B cell (primary cell): ENCODE measurements at regions of chr11 and their contacts with region 1.

Region 1: GRCh38 chr11:118870396-118871345 is 13.0 kb upstream of the CXCR5 start:
- DNase-seq: peak; percentile 86
- ATAC-seq: peak; percentile 61
- H3K4me3 ChIP-seq: peak overlapping the region; percentile 15 to 66 (median 48)
- H3K4me3 Mint-ChIP-seq: peak overlapping the region; percentile 90
- H3K27ac ChIP-seq: peak overlapping the region; percentile 93 to 99
- H3K27ac Mint-ChIP-seq: peak overlapping the region; percentile 99
- H3K4me1 ChIP-seq: peaks cover 61 to 72% of the 10 kb centered on the region in 2 donors
- H3K4me1 Mint-ChIP-seq: peaks cover 60% of the 10 kb centered on the region
- H3K27me3 ChIP-seq: no peaks in the 10 kb centered on the region
- H3K27me3 Mint-ChIP-seq: no peaks in the 10 kb centered on the region
- CTCF ChIP-seq: no peak

Region 2: DNA sequence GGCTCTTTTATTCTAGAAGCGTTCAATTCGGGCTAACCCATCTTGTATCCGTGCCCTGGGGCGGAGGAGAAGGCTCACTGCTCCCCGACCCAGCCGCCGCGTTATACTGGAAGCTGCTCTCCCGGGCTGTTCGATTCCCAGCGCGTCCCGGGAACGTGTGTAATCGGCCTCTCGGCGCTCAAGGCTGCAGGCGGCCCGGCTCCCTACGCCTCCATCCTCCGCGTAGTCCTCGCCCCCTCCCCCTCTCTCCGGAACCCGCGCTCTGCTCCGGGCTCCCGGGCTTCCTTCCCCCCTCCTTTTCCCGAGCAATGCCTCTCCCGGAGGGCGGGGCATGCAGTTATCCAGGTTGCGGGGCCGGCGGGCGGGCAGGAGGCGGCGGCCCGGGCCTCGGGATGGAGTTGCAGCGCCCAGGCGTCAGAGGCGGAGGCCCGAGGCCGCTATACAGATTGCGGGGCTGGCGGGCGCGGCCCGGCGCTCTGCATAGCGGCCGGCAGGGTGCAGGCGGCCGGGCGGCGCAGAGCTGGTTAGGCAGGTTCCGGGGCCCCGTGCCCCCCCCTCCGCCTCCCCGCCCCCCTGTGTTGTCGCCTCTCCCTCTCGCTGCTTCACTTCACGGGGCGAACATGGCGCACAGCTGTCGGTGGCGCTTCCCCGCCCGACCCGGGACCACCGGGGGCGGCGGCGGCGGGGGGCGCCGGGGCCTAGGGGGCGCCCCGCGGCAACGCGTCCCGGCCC is 434.6 kb before region 1 on chr11 and contains the start of gene KMT2A:
- CTCF ChIA-PET with region 1: no interaction called
- POLR2A ChIA-PET with region 1: no interaction called
- intact Hi-C with region 1: loop called (anchors 10 kb)
- DNase-seq: peak; percentile 98
- ATAC-seq: peak; percentile 67
- H3K4me3 ChIP-seq: peak within 1 kb of the TSS; percentile 80 to 93 (median 87)
- H3K4me3 Mint-ChIP-seq: peak within 1 kb of the TSS; percentile 97
- H3K27ac ChIP-seq: peak within 1 kb of the TSS; percentile 83 to 94
- H3K27ac Mint-ChIP-seq: peak within 1 kb of the TSS; percentile 99
- H3K4me1 ChIP-seq: peaks cover 24 to 31% of the 10 kb centered on the region in 2 donors
- H3K4me1 Mint-ChIP-seq: peaks cover 42% of the 10 kb centered on the region
- H3K27me3 ChIP-seq: no peaks in the 10 kb centered on the region
- H3K27me3 Mint-ChIP-seq: no peaks in the 10 kb centered on the region
- CTCF ChIP-seq: no peak
- total RNA-seq, gene KMT2A: 175 and 198 TPM in 2 replicates

Region 3: GRCh38 chr11:118838905-118839553 is 31.6 kb before region 1 on chr11:
- CTCF ChIA-PET with region 1: interaction called, 10 read pairs
- POLR2A ChIA-PET with region 1: interaction called, 8 read pairs
- intact Hi-C with region 1: loop called (anchors 1 kb)
- DNase-seq: peak; percentile 72
- ATAC-seq: peak; percentile 85
- H3K4me3 ChIP-seq: no peak overlapping the region
- H3K4me3 Mint-ChIP-seq: peak overlapping the region; percentile 71
- H3K27ac ChIP-seq: peak overlapping the region; percentile 25 to 44
- H3K27ac Mint-ChIP-seq: peak overlapping the region; percentile 79
- H3K4me1 ChIP-seq: peaks cover 27 to 40% of the 10 kb centered on the region in 2 donors
- H3K4me1 Mint-ChIP-seq: peaks cover 41% of the 10 kb centered on the region
- H3K27me3 ChIP-seq: no peaks in the 10 kb centered on the region
- H3K27me3 Mint-ChIP-seq: no peaks in the 10 kb centered on the region
- CTCF ChIP-seq: no peak

Region 4: GRCh38 chr11:118883368-118884071 is 12.8 kb after region 1 on chr11 and contains the start of gene CXCR5:
- CTCF ChIA-PET with region 1: interaction called, 45 read pairs
- POLR2A ChIA-PET with region 1: interaction called, 90 read pairs
- intact Hi-C with region 1: loop called (anchors 1 kb)
- DNase-seq: peak; percentile 94
- ATAC-seq: peak; percentile 83
- H3K4me3 ChIP-seq: peak within 1 kb of the TSS; percentile 80 to 99 (median 95)
- H3K4me3 Mint-ChIP-seq: peak within 1 kb of the TSS; percentile 97
- H3K27ac ChIP-seq: peak within 1 kb of the TSS; percentile 91 to 99
- H3K27ac Mint-ChIP-seq: peak within 1 kb of the TSS; percentile 90
- H3K4me1 ChIP-seq: peaks cover 47 to 63% of the 10 kb centered on the region in 2 donors
- H3K4me1 Mint-ChIP-seq: peaks cover 72% of the 10 kb centered on the region
- H3K27me3 ChIP-seq: no peaks in the 10 kb centered on the region
- H3K27me3 Mint-ChIP-seq: no peaks in the 10 kb centered on the region
- CTCF ChIP-seq: peak; percentile 41
- total RNA-seq, gene CXCR5: 108 and 111 TPM in 2 replicates

Region 5: GRCh38 chr11:118895142-118896039 is 24.7 kb after region 1 on chr11:
- CTCF ChIA-PET with region 1: interaction called, 19 read pairs
- POLR2A ChIA-PET with region 1: interaction called, 13 read pairs
- intact Hi-C with region 1: no loop called
- DNase-seq: peak; percentile 91
- ATAC-seq: peak; percentile 59
- H3K4me3 ChIP-seq: peak overlapping the region in 4 of 5 experiments; percentile 28 to 51 (median 44)
- H3K4me3 Mint-ChIP-seq: peak overlapping the region; percentile 79
- H3K27ac ChIP-seq: peak overlapping the region; percentile 95 to 99
- H3K27ac Mint-ChIP-seq: peak overlapping the region; percentile 86
- H3K4me1 ChIP-seq: peaks cover 73 to 83% of the 10 kb centered on the region in 2 donors
- H3K4me1 Mint-ChIP-seq: peaks cover 83% of the 10 kb centered on the region
- H3K27me3 ChIP-seq: no peaks in the 10 kb centered on the region
- H3K27me3 Mint-ChIP-seq: no peaks in the 10 kb centered on the region
- CTCF ChIP-seq: no peak

Region 6: DNA sequence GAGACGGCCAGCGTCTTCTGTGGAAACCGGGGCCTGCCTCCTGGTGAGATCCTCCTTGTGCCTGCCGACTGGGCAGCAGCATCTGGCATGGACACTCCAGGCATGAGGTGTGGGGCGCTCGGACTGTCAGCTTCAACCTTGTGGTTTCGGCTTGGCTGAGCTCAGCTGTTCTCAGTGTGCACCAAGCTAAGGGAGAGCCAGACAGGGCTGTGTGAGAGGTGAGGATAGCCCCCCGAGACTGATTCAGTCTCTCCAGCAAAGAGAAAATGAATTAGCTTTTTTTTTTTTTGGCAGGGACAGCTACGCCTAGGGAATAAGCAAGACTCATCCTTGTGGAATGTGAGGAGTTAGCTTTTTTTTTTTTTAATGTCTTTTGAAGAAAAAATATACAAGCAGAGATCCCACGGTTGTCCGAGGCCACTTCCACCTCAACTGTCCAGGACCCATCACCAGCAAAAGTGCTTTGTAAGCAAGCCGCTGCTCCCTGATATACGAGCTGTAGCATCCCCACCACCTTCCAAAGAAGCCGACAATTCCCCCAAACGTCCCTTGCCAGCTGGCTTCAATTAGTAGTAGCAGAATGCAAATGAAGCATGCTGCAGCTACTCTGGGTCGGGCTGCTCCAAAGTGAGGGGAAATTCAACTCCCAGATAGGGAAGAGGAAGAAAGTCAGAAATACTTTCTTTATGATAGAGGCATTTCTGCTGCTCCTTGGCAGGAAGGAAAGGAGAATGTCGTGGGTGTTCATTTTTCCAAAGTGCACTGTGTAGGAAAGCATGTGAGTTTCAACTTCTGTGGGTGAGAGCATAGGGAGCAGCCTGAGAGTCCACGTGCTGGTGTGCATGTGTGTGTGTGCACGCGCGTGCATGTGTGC is 562.0 kb after region 1 on chr11:
- CTCF ChIA-PET with region 1: no interaction called
- POLR2A ChIA-PET with region 1: no interaction called
- intact Hi-C with region 1: no loop called
- DNase-seq: no peak
- ATAC-seq: no peak
- H3K4me3 ChIP-seq: no peak overlapping the region
- H3K4me3 Mint-ChIP-seq: no peak overlapping the region
- H3K27ac ChIP-seq: no peak overlapping the region
- H3K27ac Mint-ChIP-seq: no peak overlapping the region
- H3K4me1 ChIP-seq: no peaks in the 10 kb centered on the region
- H3K4me1 Mint-ChIP-seq: no peaks in the 10 kb centered on the region
- H3K27me3 ChIP-seq: peaks cover 0 to 3% (median 1%) of the 10 kb centered on the region in 4 experiments
- H3K27me3 Mint-ChIP-seq: peaks cover 47% of the 10 kb centered on the region
- CTCF ChIP-seq: no peak